Activated CD4-positive, alpha-beta memory T cell treated with anti-CD3 and anti-CD28 coated beads for 36 hours (primary cell): ENCODE measurements at regions of chr11 and their contacts with region 1.

Region 1: DNA sequence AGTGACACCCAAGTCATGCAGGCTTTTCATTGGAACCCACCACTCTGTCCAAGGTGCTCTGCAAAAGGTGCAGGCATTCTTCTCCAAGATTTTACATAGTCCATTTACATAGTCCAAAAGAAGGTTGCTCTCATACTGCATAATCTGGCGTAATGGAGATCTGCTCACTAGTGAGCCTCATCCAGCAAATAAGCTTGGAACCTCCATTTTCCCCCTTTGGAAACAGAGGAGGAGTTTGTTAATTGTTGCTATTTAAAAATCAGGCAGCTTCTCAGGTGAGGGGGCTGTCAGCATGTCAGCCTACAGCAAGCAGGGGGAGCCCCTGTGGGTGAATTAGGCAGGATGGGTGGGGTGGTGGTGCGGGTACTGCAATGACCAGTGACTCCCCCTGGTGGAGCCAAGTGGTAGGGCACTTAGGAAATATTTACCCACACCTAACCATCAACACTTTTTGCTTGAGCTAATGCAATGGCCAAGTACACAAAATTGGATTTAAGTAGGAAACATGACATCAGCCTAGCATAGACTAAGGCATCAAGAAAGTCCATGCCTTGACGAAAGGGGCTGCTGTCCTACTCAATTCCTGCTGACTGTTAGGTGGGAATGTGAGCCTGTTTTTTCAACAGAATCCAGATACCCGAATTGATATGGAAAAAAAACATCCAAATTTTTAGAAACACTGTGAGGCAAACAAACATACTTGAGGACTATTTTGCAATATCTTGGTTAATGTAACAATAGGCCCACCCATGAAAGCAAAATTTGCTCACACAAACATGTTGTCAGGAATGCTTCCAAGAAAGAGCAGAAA is 64.5 kb downstream of the AMBRA1 start:
- DNase-seq: peak; percentile 84
- H3K4me3 Mint-ChIP-seq: no peak overlapping the region
- H3K27ac Mint-ChIP-seq: peak overlapping the region; percentile 80
- H3K4me1 Mint-ChIP-seq: peaks cover 38% of the 10 kb centered on the region
- H3K27me3 Mint-ChIP-seq: no peaks in the 10 kb centered on the region

Region 2: GRCh38 chr11:46272816-46273427 is 256.4 kb before region 1 on chr11:
- CTCF ChIA-PET with region 1: no interaction called
- POLR2A ChIA-PET with region 1: no interaction called
- intact Hi-C with region 1: no loop called
- DNase-seq: no peak
- H3K4me3 Mint-ChIP-seq: no peak overlapping the region
- H3K27ac Mint-ChIP-seq: no peak overlapping the region
- H3K4me1 Mint-ChIP-seq: peaks cover 5% of the 10 kb centered on the region
- H3K27me3 Mint-ChIP-seq: peaks cover 12% of the 10 kb centered on the region

Region 3: DNA sequence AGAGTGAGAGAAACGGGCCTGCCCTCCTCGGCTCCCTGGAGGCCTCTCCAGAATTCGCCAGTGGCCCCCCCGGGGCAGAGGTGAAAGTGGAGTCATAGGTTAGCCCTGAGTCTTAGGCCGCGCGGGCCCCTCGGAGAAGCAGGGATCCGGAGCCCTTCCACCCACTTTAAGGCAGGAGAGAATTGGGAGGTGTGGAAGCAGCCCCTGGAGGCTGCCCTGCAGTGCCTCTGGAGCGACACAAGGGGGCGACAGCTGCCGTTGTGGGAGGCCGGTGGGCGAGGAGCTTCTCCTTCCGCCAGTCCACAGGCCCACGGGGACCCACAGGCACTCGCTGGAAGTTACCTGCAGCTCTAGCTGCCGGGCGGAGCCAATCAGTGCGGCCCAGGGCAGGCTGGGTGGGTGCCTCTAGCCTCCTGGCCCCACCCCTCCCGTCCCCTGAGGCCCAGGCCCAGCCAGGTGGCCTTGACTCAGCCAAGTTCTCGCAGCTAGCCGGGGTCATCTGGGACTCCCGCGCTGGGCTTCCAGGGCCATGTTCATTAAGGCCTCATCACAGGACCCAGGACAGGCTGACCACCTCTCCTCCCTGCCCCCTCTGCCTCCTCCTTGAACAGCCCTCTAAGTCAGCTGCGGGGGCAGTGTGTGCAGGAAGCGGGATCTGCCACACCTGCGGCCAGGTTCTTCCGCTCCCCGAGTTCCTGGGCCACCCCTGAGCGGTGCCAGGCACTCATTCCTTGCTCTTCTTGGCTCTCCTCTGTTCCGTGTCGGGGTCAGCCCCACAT is 177.0 kb before region 1 on chr11:
- CTCF ChIA-PET with region 1: interaction called, 16 read pairs
- POLR2A ChIA-PET with region 1: no interaction called
- intact Hi-C with region 1: loop called (anchors 1 kb)
- DNase-seq: peak; percentile 86
- H3K4me3 Mint-ChIP-seq: peak overlapping the region; percentile 76
- H3K27ac Mint-ChIP-seq: peak overlapping the region; percentile 87
- H3K4me1 Mint-ChIP-seq: peaks cover 78% of the 10 kb centered on the region
- H3K27me3 Mint-ChIP-seq: no peaks in the 10 kb centered on the region

Region 4: DNA sequence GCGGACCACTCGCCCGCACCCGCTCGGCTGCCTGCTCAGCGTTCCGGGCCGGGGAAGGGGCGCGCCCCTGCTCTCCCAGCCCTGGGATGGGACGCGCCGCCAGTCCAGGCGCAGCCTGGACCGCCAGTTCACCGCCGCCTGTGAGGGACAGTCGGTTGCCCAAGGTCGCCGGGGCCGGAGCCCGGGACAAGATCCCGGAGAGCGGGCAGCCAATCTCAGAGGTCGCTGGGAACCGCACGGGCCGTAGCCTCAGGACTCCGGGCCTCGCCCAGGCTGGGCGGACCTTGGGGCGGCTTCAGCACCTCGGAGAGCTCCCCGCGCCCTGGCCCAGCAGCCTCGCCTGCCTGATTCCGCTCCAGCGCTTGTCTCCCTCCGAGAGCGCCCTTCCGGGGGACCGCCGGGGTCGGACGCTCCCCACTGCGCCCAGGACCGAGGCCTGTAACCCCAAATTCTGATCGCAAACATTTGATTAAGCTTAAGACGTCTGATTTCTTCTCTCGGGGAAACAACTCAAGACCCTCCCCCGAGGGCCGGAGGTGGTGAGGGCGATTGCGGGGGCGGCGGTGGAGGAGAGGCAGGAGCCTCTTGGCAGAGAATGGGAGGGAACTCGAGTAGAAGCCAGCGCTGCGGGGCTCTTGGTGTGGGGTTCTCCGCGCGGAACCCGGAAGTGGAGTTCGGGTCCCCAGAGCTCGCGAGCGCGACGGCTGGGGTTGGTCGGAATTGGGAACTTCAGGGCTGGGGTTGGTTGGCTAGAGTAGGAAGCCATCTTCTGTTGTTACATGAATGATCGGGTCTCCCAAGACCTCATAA is 136.7 kb before region 1 on chr11:
- CTCF ChIA-PET with region 1: interaction called, 53 read pairs
- POLR2A ChIA-PET with region 1: no interaction called
- intact Hi-C with region 1: loop called (anchors 2 kb)
- DNase-seq: peak; percentile 87
- H3K4me3 Mint-ChIP-seq: peak overlapping the region; percentile 71
- H3K27ac Mint-ChIP-seq: no peak overlapping the region
- H3K4me1 Mint-ChIP-seq: peaks cover 27% of the 10 kb centered on the region
- H3K27me3 Mint-ChIP-seq: peaks cover 37% of the 10 kb centered on the region

Region 5: GRCh38 chr11:46475926-46476545 is 53.3 kb before region 1 on chr11:
- CTCF ChIA-PET with region 1: interaction called, 12 read pairs
- POLR2A ChIA-PET with region 1: interaction called, 3 read pairs
- intact Hi-C with region 1: no loop called
- DNase-seq: no peak
- H3K4me3 Mint-ChIP-seq: no peak overlapping the region
- H3K27ac Mint-ChIP-seq: peak overlapping the region; percentile 61
- H3K4me1 Mint-ChIP-seq: peaks cover 43% of the 10 kb centered on the region
- H3K27me3 Mint-ChIP-seq: no peaks in the 10 kb centered on the region

Region 6: GRCh38 chr11:46489661-46490560 is 39.4 kb before region 1 on chr11:
- CTCF ChIA-PET with region 1: interaction called, 77 read pairs
- POLR2A ChIA-PET with region 1: no interaction called
- intact Hi-C with region 1: loop called (anchors 2 kb)
- DNase-seq: peak; percentile 35
- H3K4me3 Mint-ChIP-seq: no peak overlapping the region
- H3K27ac Mint-ChIP-seq: no peak overlapping the region
- H3K4me1 Mint-ChIP-seq: peaks cover 2% of the 10 kb centered on the region
- H3K27me3 Mint-ChIP-seq: no peaks in the 10 kb centered on the region

Region 7: GRCh38 chr11:46498179-46498578 is 31.1 kb before region 1 on chr11:
- CTCF ChIA-PET with region 1: interaction called, 77 read pairs
- POLR2A ChIA-PET with region 1: no interaction called
- intact Hi-C with region 1: no loop called
- DNase-seq: no peak
- H3K4me3 Mint-ChIP-seq: no peak overlapping the region
- H3K27ac Mint-ChIP-seq: no peak overlapping the region
- H3K4me1 Mint-ChIP-seq: peaks cover 6% of the 10 kb centered on the region
- H3K27me3 Mint-ChIP-seq: no peaks in the 10 kb centered on the region

Region 8: DNA sequence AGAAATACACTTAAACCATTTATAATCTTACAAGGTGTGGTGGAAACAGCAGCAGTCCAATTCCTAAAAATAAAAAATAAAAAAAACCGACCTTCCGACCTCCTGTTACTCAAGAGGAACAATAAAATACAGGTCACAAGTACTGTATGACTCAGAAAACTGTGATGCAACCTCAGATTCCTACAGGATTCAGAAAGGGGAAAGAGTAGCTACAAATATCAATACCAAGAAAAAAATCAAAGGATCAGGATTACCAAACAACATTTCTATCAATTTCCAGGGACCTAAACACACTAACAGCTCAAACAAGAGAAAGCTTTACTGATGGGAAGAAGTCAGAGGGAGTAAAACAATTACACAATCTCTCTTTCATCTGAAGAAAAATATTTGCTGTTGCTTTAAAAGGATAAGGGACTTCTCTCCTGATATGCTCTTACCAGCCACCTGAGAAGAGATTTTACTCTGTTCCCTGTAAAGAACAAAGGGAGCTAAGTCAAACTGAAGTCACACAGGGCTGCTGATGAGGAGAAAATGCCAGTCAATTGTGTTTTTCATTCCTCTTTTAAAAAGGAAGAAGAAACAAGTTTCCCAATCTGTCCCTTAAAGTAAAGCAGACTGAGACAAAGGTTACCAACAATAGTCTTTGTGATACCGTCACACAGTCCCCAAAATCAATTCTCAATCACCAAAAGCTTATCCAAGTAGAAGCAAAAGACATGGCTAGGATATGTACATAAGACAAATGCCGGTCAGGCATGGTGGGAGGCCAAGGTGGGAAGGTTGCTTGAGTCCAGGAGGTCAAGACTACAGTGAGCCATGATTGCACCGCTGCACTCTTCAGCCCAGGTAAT is 25.1 kb after region 1 on chr11:
- CTCF ChIA-PET with region 1: interaction called, 11 read pairs
- POLR2A ChIA-PET with region 1: no interaction called
- intact Hi-C with region 1: no loop called
- DNase-seq: no peak
- H3K4me3 Mint-ChIP-seq: no peak overlapping the region
- H3K27ac Mint-ChIP-seq: no peak overlapping the region
- H3K4me1 Mint-ChIP-seq: peaks cover 44% of the 10 kb centered on the region
- H3K27me3 Mint-ChIP-seq: no peaks in the 10 kb centered on the region

Region 9: GRCh38 chr11:46639197-46639839 is 110.0 kb after region 1 on chr11:
- CTCF ChIA-PET with region 1: no interaction called
- POLR2A ChIA-PET with region 1: no interaction called
- intact Hi-C with region 1: no loop called
- DNase-seq: no peak
- H3K4me3 Mint-ChIP-seq: no peak overlapping the region
- H3K27ac Mint-ChIP-seq: no peak overlapping the region
- H3K4me1 Mint-ChIP-seq: peaks cover 7% of the 10 kb centered on the region
- H3K27me3 Mint-ChIP-seq: no peaks in the 10 kb centered on the region

Region 10: GRCh38 chr11:46710821-46711269 is 181.5 kb after region 1 on chr11:
- CTCF ChIA-PET with region 1: no interaction called
- POLR2A ChIA-PET with region 1: no interaction called
- intact Hi-C with region 1: no loop called
- DNase-seq: no peak
- H3K4me3 Mint-ChIP-seq: no peak overlapping the region
- H3K27ac Mint-ChIP-seq: no peak overlapping the region
- H3K4me1 Mint-ChIP-seq: peaks cover 2% of the 10 kb centered on the region
- H3K27me3 Mint-ChIP-seq: no peaks in the 10 kb centered on the region